Activated T-helper 2 cell treated with anti-CD3 and anti-CD28 coated beads, Interferon-gamma antibody, Interleukin-2, Interleukin-4, amounts not matched to agents 10 μg/mL and 5 μg/mL and 100 μg/mL, durations not matched to agents 14 hours and 24 hours and 36 hours (primary cell): ENCODE measurements at regions of chr17 and their contacts with region 1.

Region 1: DNA sequence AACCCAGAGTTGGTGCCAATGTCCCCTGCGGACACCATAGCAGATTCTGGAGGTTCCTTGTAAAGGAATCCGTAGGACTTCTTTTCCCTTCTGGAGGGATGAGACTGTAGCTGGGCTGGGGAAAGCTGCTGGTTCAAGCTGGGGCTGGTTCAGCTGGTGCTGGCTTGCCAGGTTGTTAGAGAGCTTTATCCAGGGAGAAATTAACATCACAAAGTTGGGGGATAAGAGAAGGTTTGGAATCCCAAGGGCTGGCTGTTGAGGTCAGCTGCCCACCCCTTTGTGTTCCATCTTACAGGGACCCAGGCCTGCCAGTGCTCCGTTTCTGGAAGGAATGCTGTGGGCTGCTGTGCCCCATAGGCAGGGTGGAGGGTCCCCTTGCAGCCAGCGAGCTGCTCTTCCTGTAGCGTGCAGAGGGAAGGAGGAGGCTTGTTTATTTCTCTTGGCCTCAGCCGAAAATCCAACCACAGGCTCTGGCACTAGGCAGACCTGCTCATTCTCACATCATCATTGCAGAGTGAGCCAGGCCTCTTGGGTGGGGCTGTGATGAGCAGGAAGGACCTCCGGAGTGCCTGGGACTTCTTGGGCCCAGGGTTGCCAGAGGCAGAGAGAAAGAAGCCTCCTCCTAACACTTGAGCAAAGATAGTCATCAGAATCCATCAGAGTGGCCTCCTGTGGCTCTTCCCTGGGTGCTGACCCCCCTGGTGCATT is 251.1 kb downstream of the SEC14L1 start:
- DNase-seq: peak; percentile 56
- H3K4me3 Mint-ChIP-seq: peak overlapping the region; percentile 67
- H3K27ac Mint-ChIP-seq: peak overlapping the region; percentile 84
- H3K4me1 Mint-ChIP-seq: peaks cover 63% of the 10 kb centered on the region
- H3K27me3 Mint-ChIP-seq: no peaks in the 10 kb centered on the region

Region 2: DNA sequence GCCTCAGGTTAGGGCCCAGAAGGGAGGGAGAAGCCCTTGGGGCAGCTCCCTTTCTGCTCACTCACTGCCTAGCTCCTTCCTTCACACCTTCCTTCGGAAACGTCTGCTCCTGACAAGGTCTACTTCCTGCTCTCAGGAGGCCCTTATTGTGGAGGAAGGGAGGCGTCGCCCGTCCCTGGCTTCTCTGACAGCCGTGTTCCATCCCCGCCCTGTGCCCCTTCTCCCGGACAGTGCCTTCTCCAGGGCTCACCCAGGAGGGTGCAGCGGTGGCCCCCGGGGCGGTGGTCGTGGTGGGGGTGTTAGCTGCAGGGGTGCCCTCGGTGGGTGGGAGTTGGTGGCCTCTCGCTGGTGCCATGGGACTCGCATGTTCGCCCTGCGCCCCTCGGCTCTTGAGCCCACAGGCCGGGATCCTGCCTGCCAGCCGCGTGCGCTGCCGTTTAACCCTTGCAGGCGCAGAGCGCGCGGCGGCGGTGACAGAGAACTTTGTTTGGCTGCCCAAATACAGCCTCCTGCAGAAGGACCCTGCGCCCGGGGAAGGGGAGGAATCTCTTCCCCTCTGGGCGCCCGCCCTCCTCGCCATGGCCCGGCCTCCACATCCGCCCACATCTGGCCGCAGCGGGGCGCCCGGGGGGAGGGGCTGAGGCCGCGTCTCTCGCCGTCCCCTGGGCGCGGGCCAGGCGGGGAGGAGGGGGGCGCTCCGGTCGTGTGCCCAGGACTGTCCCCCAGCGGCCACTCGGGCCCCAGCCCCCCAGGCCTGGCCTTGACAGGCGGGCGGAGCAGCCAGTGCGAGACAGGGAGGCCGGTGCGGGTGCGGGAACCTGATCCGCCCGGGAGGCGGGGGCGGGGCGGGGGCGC is 19.2 kb before region 1 on chr17:
- intact Hi-C with region 1: loop called (anchors 1 kb)
- DNase-seq: peak; percentile 77
- H3K4me3 Mint-ChIP-seq: peak overlapping the region; percentile 75
- H3K27ac Mint-ChIP-seq: peak overlapping the region; percentile 75
- H3K4me1 Mint-ChIP-seq: peaks cover 44% of the 10 kb centered on the region
- H3K27me3 Mint-ChIP-seq: no peaks in the 10 kb centered on the region